BJ (cell line): ENCODE measurements at regions of chr17 and their contacts with region 1.

Region 1: DNA sequence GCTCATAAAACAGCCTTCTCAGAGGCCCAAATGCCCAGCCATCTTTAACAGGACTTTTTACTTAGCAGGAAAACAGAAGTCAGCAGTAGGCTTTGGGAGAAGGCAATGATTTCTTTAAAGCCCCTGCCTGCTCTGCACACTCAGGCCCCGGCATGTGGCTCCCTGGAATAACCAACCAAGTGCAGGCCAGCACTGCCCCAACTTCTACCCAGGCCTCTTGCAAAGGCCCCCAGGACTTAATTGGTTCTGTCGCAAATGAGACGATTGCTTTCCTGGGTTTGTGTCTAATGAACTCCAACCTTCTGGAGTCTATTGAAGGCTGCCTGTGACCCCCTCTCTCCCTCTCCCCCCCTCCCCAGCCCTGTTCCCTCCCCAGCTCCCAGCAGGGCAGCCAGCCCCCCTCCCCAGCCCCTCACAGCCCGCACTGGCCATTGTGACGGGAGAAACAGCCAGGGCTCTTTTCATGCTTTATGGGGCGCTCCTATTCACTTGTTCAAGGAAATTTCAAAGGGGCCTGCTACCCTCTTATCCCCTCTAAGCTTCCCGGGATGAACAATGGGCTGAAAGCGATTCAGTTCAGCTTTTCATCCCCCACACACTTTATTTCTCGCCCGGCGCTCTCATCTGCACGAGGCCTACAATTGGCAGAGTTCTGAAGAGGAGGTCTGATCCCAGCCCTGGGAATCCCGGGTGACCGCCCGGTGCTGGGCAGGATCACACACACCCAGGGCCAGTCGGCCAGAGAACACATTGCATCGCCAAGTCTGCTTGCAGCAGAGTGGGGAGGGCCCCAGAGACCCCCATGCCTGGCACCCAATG is 15.5 kb downstream of the AXIN2 start:
- DNase-seq: no peak
- H3K4me3 ChIP-seq: no peak overlapping the region
- H3K27me3 ChIP-seq: no peaks in the 10 kb centered on the region
- CTCF ChIP-seq: no peak

Region 2: DNA sequence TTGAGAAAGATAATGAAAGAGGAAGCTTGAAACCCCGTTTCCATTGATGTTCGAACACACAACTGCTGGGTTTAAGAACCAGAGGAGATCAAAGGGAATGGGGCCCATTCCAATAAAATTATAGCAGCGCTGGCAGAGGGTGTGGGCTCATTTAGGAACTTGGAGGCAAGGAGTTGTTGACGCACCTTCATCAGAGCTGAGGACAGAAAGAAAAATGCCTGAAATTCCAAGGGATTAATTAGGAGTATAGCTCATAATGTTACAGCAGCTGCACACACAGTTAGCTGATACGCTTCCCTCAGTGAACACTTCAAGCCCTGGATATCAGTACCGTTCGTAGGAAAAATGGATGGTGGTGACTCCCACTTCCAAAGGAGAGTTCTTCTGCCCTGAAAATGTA is 111.7 kb before region 1 on chr17:
- CTCF ChIA-PET with region 1: no interaction called
- POLR2A ChIA-PET with region 1: no interaction called
- DNase-seq: no peak
- H3K4me3 ChIP-seq: no peak overlapping the region
- H3K27me3 ChIP-seq: peaks cover 3% of the 10 kb centered on the region
- CTCF ChIP-seq: no peak

Region 3: DNA sequence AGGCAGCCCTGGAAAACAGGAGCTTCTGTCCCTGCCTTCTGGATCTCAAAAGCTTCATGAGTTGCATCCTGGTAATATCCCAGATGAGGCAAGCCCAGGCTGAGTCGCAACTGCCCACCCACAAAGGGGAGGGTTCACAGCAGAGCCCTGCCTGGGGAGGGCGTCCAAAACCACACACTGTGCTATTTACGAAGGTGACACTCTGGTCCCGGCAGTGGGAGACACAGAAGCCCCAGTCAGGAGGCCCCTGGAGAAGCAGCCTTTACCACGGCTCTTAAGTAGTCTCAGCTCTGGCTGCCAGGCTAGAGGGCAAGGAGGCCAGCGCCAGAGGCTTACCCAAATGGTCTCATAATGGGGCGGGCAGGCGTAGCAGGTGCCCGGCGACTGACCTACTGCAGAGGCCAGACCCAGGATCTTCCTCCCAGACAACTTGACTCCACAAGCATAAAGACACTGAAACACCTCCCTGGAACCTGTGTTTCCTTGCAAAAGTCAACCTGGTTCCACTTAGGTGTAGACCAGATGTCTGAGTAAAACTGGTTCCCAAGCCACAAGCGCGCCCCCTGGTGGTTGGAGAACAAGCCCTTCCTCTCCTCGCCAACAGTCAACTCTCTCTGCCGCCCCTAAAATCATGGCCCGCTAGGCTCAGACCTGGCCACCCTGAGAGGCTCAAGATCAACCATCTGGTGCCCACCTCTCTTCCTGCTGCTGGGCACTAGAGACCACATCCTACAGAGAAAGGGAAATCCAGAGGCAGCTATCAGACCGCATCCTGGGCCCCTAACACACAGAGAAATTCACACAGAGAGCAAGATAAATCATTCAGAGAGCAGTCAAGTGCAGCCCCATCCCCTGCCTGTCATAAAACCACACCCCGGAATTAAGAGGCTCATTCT is 10.3 kb after region 1 on chr17:
- CTCF ChIA-PET with region 1: interaction called, 19 read pairs
- POLR2A ChIA-PET with region 1: no interaction called
- DNase-seq: no peak
- H3K4me3 ChIP-seq: no peak overlapping the region
- H3K27me3 ChIP-seq: peaks cover 11% of the 10 kb centered on the region
- CTCF ChIP-seq: peak; percentile 88